HCT116 (cell line): ENCODE measurements at regions of chr3 and their contacts with region 1.

Region 1: DNA sequence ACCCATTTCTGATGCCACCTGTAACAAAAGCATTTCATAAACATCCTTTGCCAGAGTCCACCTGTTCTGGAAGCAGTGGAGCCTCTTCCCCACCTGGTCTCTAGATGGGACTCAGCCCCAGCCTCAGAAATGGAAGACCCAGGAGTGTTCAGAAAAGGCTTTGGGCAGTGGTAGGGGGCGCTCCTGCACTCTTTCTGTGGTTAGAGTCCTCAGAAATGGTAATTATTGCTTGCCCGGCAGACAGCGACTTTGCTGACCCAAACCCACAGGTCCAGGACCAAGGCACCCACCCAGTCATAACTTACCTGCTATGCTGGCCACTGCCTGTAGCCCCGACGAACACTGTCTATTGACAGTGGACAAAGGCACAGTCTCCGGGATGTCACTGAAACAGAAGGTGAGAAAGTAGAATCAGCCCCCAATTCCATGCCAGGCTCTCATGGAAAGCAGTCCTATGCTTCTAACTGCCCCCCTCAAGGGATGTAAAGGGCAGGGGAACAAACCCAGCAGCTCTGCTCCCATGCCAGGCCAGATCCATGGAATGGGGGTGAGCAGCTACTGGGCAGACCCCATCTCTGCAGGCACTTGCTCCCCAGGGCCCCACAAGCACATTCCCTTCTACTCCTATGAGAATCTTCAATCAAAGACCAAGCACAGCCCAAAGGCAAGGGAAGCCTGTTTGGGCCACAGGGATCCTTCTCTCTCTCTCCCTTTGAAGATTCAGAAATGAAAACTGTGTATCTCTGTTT is 5.1 kb downstream of the ACAA1 start:
- DNase-seq: no peak
- ATAC-seq: peak; percentile 58
- H3K4me3 ChIP-seq: no peak overlapping the region
- H3K27ac ChIP-seq: no peak overlapping the region
- H3K4me1 ChIP-seq: peaks cover 22 to 33% of the 10 kb centered on the region in 2 experiments
- H3K27me3 ChIP-seq: no peaks in the 10 kb centered on the region
- CTCF ChIP-seq: peak in 2 of 3 experiments; percentile 52 to 64; a peak in 4 of 6 replicates
- POLR2A ChIP-seq: no peak
- RAD21 ChIP-seq: no peak

Region 2: DNA sequence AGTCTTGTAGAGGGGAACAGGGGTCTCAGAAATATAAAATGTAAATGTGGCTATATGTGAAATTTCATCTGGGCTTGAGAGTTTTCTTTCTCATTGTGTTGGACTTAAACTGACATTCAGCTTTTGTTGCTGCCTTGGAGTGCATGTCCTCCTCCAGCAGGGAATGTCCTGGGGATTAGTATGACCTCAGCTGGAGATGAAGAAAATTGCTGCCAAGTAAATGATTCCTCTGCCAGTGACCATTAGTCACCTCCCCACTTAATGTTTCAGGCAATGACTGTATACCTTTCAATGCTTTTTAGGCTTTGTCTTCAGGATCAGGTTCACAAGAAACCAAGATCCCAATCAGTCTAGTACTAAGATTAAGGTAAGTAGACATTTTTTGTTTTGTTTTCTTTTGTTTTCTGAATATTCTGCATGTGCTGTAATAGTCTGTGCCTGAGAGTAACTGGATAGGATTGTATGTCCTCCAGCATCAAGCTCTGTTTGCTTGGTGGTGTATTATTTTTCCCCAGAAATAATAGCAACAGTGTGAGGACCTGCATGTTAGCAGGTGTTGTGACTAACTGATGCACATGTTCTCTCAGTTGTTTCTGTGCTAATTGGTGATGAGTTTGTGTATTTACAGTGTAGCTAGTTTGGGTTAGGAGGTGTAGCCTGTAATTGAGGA is 115.7 kb after region 1 on chr3:
- CTCF ChIA-PET with region 1: no interaction called
- POLR2A ChIA-PET with region 1: no interaction called
- RAD21 ChIA-PET with region 1: no interaction called
- intact Hi-C with region 1: loop called (anchors 5 kb)
- DNase-seq: peak; percentile 13
- ATAC-seq: peak; percentile 82
- H3K4me3 ChIP-seq: no peak overlapping the region
- H3K27ac ChIP-seq: no peak overlapping the region
- H3K4me1 ChIP-seq: no peaks in the 10 kb centered on the region; a peak in 1 of 4 replicates
- H3K27me3 ChIP-seq: no peaks in the 10 kb centered on the region
- CTCF ChIP-seq: peak in 1 of 3 experiments; percentile 29; a peak in 1 of 6 replicates
- POLR2A ChIP-seq: no peak
- RAD21 ChIP-seq: peak; percentile 56

Region 3: GRCh38 chr3:38297947-38298711 is 166.3 kb after region 1 on chr3:
- CTCF ChIA-PET with region 1: interaction called, 4 read pairs
- POLR2A ChIA-PET with region 1: no interaction called
- RAD21 ChIA-PET with region 1: no interaction called
- intact Hi-C with region 1: loop called (anchors 2 kb)
- DNase-seq: peak; percentile 15
- ATAC-seq: peak; percentile 97
- H3K4me3 ChIP-seq: no peak overlapping the region
- H3K27ac ChIP-seq: no peak overlapping the region
- H3K4me1 ChIP-seq: no peaks in the 10 kb centered on the region
- H3K27me3 ChIP-seq: no peaks in the 10 kb centered on the region
- CTCF ChIP-seq: peak; percentile 63 to 89 (median 82)
- POLR2A ChIP-seq: no peak
- RAD21 ChIP-seq: peak; percentile 45

Region 4: DNA sequence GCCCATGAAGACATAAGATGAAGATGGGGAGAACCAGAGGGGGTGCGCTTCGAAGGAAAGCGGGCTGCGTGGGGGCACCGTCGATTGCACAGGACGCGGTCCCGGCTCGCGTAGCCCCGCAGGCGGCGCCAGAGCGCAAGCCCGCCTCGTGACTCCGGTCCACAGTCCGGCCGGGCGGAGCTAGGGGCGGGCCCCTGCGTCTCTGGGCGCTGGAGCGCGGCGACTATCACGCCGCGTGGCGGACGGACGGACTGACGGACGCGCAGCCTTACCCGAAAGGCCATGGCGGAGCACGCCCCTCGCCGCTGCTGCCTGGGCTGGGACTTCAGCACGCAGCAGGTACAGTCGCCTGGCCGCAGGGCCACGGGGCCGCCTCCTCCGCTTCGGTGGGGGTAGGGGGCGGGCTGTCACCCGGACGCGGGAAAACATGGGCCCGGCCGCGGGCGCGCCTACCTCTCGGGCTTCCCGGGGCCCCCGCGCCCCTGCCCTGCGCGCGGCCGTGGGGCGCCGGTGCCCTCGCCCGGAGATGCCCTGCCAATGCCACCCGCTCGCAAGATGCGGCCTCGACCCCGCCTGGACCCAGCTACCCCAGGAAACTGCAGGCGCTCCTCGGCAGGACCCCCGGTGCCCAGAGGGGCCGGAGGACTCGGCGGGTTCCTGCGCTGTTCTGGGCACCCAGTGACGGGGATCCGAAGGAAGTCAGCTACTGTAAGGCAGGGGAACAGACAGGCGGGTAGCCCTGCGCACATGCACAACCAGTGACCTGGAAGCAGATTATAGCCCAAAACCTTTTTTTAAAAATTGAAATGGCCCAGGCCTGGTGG is 215.0 kb after region 1 on chr3 and contains the start of gene XYLB:
- CTCF ChIA-PET with region 1: interaction called, 3 read pairs
- POLR2A ChIA-PET with region 1: interaction called, 3 read pairs
- RAD21 ChIA-PET with region 1: no interaction called
- intact Hi-C with region 1: loop called (anchors 5 kb)
- DNase-seq: peak; percentile 63
- ATAC-seq: peak; percentile 94
- H3K4me3 ChIP-seq: peak within 1 kb of the TSS; percentile 77 to 87
- H3K27ac ChIP-seq: peak within 1 kb of the TSS; percentile 64
- H3K4me1 ChIP-seq: peaks cover 0 to 34% of the 10 kb centered on the region in 2 experiments; a peak in 2 of 4 replicates
- H3K27me3 ChIP-seq: no peaks in the 10 kb centered on the region
- CTCF ChIP-seq: peak; percentile 68 to 81 (median 76)
- POLR2A ChIP-seq: peak; percentile 29
- RAD21 ChIP-seq: peak; percentile 74
- total RNA-seq, gene XYLB: 14.0 TPM

Region 5: GRCh38 chr3:38479431-38480092 is 347.8 kb after region 1 on chr3:
- CTCF ChIA-PET with region 1: no interaction called
- POLR2A ChIA-PET with region 1: no interaction called
- RAD21 ChIA-PET with region 1: no interaction called
- intact Hi-C with region 1: loop called (anchors 5 kb)
- DNase-seq: no peak
- ATAC-seq: peak; percentile 92
- H3K4me3 ChIP-seq: no peak overlapping the region
- H3K27ac ChIP-seq: no peak overlapping the region
- H3K4me1 ChIP-seq: no peaks in the 10 kb centered on the region
- H3K27me3 ChIP-seq: no peaks in the 10 kb centered on the region
- CTCF ChIP-seq: peak; percentile 83 to 88 (median 88)
- POLR2A ChIP-seq: no peak
- RAD21 ChIP-seq: peak; percentile 97

Region 6: GRCh38 chr3:38823722-38824121 is 691.9 kb after region 1 on chr3:
- CTCF ChIA-PET with region 1: no interaction called
- POLR2A ChIA-PET with region 1: no interaction called
- RAD21 ChIA-PET with region 1: no interaction called
- intact Hi-C with region 1: no loop called
- DNase-seq: no peak
- ATAC-seq: no peak
- H3K4me3 ChIP-seq: no peak overlapping the region
- H3K27ac ChIP-seq: no peak overlapping the region
- H3K4me1 ChIP-seq: no peaks in the 10 kb centered on the region
- H3K27me3 ChIP-seq: peaks cover 36% of the 10 kb centered on the region; the same call in 1 of the 2 replicates
- CTCF ChIP-seq: no peak
- POLR2A ChIP-seq: no peak
- RAD21 ChIP-seq: no peak